ENCODE measurements at regions of chr17 and their contacts with region 1.

Region 1: GRCh38 chr17:46915591-46915990 is 7.4 kb upstream of the GOSR2 start:
- DNase-seq: no peak
- ATAC-seq: no peak
- H3K4me3 ChIP-seq: no peak overlapping the region
- H3K27ac ChIP-seq: no peak overlapping the region
- H3K4me1 ChIP-seq: no peaks in the 10 kb centered on the region
- H3K27me3 ChIP-seq: peaks cover 3 to 23% of the 10 kb centered on the region in 2 experiments; a peak in 4 of 5 replicates
- CTCF ChIP-seq: no peak
- EP300 ChIP-seq: no peak
- POLR2A ChIP-seq: no peak
- RAD21 ChIP-seq: no peak

Region 2: DNA sequence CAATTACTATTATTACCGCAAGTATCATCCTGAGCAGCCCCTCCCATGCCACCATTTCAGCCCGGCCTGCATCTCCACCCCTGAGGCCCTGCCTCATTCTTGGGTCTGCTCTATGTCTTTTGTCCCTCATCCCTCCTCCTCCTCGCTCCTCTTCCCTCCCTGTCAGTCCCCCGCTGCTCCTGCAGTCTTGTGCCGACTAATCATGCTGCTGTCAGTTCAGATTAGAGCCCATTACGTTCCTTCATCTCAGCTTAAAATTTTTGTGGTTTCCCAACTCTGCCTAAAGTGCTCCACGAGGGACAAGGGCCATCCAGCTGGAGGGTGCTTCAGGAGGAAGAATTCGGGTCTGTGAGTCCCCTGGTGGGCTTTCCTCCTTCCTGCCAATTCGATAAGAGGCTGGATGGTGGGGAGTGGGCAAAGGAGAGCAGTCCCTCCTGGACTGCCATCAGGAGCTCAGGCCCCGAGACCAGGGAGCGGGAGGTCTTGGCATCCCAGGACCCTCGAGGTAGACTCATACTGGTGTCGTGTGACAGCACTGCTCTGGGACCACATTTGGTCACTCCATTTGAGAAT is 25.5 kb before region 1 on chr17:
- CTCF ChIA-PET with region 1: no interaction called
- POLR2A ChIA-PET with region 1: no interaction called
- in situ Hi-C with region 1: no loop called
- intact Hi-C with region 1: no loop called
- DNase-seq: no peak
- ATAC-seq: no peak
- H3K4me3 ChIP-seq: 0 out of 6 replicates have a peak overlapping the region, but pooled peaks of 1 of the 3 experiments have one; percentile 2
- H3K27ac ChIP-seq: no peak overlapping the region
- H3K4me1 ChIP-seq: peaks cover 49% of the 10 kb centered on the region
- H3K27me3 ChIP-seq: peaks cover 1 to 41% of the 10 kb centered on the region in 2 experiments
- CTCF ChIP-seq: no peak
- EP300 ChIP-seq: no peak
- POLR2A ChIP-seq: no peak
- RAD21 ChIP-seq: no peak

Region 3: GRCh38 chr17:46986366-46986765 is 70.8 kb after region 1 on chr17:
- CTCF ChIA-PET with region 1: no interaction called
- POLR2A ChIA-PET with region 1: no interaction called
- in situ Hi-C with region 1: no loop called
- intact Hi-C with region 1: loop called (anchors 2 kb)
- DNase-seq: no peak
- ATAC-seq: no peak
- H3K4me3 ChIP-seq: no peak overlapping the region
- H3K27ac ChIP-seq: no peak overlapping the region
- H3K4me1 ChIP-seq: peaks cover 39% of the 10 kb centered on the region
- H3K27me3 ChIP-seq: 0 out of 5 replicates have a peak, but pooled peaks cover 0 to 1% of the 10 kb centered on the region in 2 experiments
- CTCF ChIP-seq: no peak
- EP300 ChIP-seq: no peak
- POLR2A ChIP-seq: no peak
- RAD21 ChIP-seq: no peak

Measured in HepG2 (cell line).